ENCODE measurements at regions of chr14 and their contacts with region 1.

Region 1: DNA sequence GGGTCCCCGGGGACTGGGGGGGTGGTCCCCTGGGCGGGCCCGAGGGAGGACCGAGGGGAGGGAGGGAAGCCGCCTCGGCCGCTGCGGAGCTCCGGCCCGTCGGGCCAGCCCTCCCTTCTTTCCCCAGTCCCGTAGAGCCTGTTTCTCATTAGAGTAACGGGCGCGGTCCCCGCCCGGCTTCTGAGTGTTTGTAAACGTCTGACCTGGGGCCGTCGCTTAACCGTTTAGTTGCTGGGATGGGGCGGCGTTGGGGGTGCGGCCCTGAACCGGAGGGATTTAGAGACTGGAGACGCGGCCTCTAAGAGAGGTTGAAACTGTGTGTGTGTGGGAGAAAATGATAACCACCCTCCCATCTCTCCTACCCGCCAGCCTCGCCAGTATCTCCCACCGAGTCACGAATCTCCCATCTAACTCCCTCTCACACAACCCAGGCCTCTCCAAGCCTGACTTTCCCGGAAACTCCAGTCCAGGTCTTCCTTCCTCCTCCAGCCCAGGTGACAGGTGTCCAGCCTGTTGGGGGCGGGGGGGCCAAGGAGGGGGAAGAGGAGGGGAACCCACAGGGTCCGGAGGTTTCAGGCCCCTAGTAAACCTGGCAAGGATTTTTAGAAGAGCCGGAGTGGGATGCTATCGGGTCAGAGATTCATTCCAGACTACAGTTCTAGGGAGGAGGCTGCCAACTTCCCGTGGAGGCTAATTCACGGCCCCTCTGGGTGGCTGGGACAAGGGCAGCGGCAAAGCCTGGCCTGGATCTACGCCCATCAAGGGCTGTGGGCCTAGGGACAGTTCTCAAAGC is 1.1 kb upstream of the NFATC4 start:
- DNase-seq: peak; percentile 85 to 90
- H3K4me3 ChIP-seq: peak overlapping the region; percentile 66
- H3K27ac ChIP-seq: peak overlapping the region; percentile 68
- H3K4me1 ChIP-seq: peaks cover 7% of the 10 kb centered on the region
- H3K27me3 ChIP-seq: no peaks in the 10 kb centered on the region
- CTCF ChIP-seq: no peak

Region 2: DNA sequence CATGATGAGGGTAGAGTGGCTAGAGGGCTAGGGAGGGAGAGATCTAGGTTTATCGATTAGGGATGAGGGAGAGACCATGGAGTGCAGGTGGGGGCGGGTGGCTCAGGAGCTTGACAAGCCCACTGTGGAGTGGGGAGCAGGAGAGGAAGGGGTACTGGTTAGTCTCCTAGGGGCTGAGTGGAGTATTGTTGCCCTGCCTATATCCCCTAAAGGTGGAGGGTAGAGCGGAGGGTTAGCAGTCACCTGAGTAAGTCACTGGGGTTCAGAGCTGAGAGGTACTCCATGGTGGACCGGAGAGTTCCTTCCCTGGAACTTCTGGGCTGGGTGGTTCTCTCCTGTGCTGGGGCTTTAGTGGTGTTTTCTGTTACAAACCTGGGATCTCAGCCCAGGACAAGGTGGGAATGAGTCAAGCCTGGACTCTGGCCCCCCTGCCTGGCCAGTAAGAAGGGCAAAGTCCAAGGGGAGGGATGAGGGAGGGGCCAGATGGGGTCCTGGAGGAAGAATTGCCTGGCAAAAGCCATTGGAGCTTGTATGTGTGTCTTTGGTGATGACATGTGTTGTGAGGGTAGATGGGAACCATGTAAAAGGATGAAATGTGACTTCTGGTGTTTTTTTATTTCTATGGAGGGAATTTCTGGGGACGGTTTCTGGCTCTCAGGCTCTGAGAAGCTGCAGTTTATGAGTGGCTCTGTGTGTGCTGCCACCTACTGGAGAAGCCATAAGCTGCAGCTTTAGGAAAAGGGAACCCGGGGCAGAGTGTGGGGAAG is 59.2 kb before region 1 on chr14 and contains the start of gene CIDEB:
- CTCF ChIA-PET with region 1: no interaction called
- POLR2A ChIA-PET with region 1: interaction called, 25 read pairs
- intact Hi-C with region 1: no loop called
- DNase-seq: peak in 1 of 2 experiments; percentile 50
- H3K4me3 ChIP-seq: no peak within 1 kb of the TSS
- H3K27ac ChIP-seq: no peak within 1 kb of the TSS
- H3K4me1 ChIP-seq: no peaks in the 10 kb centered on the region
- H3K27me3 ChIP-seq: no peaks in the 10 kb centered on the region
- CTCF ChIP-seq: peak; percentile 80
- total RNA-seq, gene CIDEB: not detected in 2 replicates

Region 3: GRCh38 chr14:24377657-24378056 is 10.7 kb after region 1 on chr14:
- CTCF ChIA-PET with region 1: no interaction called
- POLR2A ChIA-PET with region 1: interaction called, 16 read pairs
- intact Hi-C with region 1: no loop called
- DNase-seq: peak in 1 of 2 experiments; percentile 24
- H3K4me3 ChIP-seq: no peak overlapping the region
- H3K27ac ChIP-seq: no peak overlapping the region
- H3K4me1 ChIP-seq: no peaks in the 10 kb centered on the region
- H3K27me3 ChIP-seq: no peaks in the 10 kb centered on the region
- CTCF ChIP-seq: no peak

Region 4: DNA sequence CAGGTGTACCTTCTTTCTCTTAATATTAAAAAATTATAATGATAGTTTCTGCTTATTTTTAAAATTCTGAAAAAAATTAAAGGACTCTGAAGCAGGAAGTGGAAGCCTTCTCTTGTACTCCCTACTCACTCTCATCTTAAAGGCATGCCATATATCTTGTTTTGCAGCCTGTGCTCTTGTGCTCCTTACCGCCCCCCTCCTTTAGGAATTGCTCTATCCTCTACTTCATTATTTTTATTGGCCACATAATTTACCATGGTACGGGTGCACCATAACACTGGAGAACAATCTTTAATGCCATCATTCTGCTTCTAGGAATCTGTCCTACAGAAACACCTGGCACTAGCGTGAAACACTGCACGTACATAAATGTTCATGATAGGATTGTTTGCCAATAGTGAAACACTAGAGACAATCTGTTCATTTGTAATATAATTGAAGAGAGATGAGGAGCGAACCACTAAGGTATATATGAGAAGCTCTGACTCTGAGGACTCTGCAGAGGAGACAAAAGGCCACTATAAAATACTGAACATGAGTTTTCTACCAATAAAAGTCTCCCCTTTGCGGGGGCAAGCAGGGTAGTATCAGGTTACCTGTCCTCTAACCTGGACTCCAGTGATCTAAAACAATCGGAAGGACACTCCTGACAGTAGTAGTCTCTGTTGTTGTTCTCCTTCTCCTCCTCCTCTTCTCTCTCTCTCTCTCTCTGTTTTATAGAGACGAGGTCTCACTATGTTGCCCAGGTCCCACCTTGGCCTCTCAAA is 25.6 kb after region 1 on chr14:
- CTCF ChIA-PET with region 1: interaction called, 14 read pairs
- POLR2A ChIA-PET with region 1: interaction called, 5 read pairs
- intact Hi-C with region 1: loop called (anchors 1 kb)
- DNase-seq: peak; percentile 49 to 90
- H3K4me3 ChIP-seq: peak overlapping the region; percentile 55; the same call in 1 of the 2 replicates
- H3K27ac ChIP-seq: peak overlapping the region; percentile 100
- H3K4me1 ChIP-seq: peaks cover 36% of the 10 kb centered on the region
- H3K27me3 ChIP-seq: no peaks in the 10 kb centered on the region
- CTCF ChIP-seq: peak; percentile 51

Region 5: GRCh38 chr14:24431569-24432258 is 64.8 kb after region 1 on chr14:
- CTCF ChIA-PET with region 1: interaction called, 12 read pairs
- POLR2A ChIA-PET with region 1: interaction called, 26 read pairs
- intact Hi-C with region 1: loop called (anchors 1 kb)
- DNase-seq: peak; percentile 75 to 85
- H3K4me3 ChIP-seq: peak overlapping the region; percentile 64; the same call in 1 of the 2 replicates
- H3K27ac ChIP-seq: no peak overlapping the region
- H3K4me1 ChIP-seq: peaks cover 9% of the 10 kb centered on the region
- H3K27me3 ChIP-seq: no peaks in the 10 kb centered on the region
- CTCF ChIP-seq: peak; percentile 92

Region 6: GRCh38 chr14:24630872-24631477 is 264.1 kb after region 1 on chr14:
- CTCF ChIA-PET with region 1: no interaction called
- POLR2A ChIA-PET with region 1: no interaction called
- intact Hi-C with region 1: no loop called
- DNase-seq: no peak
- H3K4me3 ChIP-seq: no peak overlapping the region
- H3K27ac ChIP-seq: no peak overlapping the region
- H3K4me1 ChIP-seq: no peaks in the 10 kb centered on the region
- H3K27me3 ChIP-seq: no peaks in the 10 kb centered on the region
- CTCF ChIP-seq: no peak

Region 7: GRCh38 chr14:24943024-24943423 is 576.1 kb after region 1 on chr14:
- CTCF ChIA-PET with region 1: no interaction called
- POLR2A ChIA-PET with region 1: no interaction called
- intact Hi-C with region 1: no loop called
- DNase-seq: peak in 1 of 2 experiments; percentile 44
- H3K4me3 ChIP-seq: no peak overlapping the region
- H3K27ac ChIP-seq: no peak overlapping the region
- H3K4me1 ChIP-seq: no peaks in the 10 kb centered on the region
- H3K27me3 ChIP-seq: no peaks in the 10 kb centered on the region
- CTCF ChIP-seq: no peak

Measured in PC-9 (cell line).